ENCODE measurements at regions of chr6 and their contacts with region 1.

Region 1: GRCh38 chr6:53064726-53065215 is 433 bp upstream of the FBXO9 start:
- DNase-seq: peak; percentile 96 to 97
- H3K4me3 ChIP-seq: peak overlapping the region; percentile 90 to 99
- H3K27ac ChIP-seq: peak overlapping the region; percentile 95
- H3K4me1 ChIP-seq: peaks cover 47% of the 10 kb centered on the region
- H3K27me3 ChIP-seq: no peaks in the 10 kb centered on the region
- CTCF ChIP-seq: peak in 1 of 3 experiments; percentile 15
- POLR2A ChIP-seq: peak in 1 of 2 donors; percentile 21

Region 2: DNA sequence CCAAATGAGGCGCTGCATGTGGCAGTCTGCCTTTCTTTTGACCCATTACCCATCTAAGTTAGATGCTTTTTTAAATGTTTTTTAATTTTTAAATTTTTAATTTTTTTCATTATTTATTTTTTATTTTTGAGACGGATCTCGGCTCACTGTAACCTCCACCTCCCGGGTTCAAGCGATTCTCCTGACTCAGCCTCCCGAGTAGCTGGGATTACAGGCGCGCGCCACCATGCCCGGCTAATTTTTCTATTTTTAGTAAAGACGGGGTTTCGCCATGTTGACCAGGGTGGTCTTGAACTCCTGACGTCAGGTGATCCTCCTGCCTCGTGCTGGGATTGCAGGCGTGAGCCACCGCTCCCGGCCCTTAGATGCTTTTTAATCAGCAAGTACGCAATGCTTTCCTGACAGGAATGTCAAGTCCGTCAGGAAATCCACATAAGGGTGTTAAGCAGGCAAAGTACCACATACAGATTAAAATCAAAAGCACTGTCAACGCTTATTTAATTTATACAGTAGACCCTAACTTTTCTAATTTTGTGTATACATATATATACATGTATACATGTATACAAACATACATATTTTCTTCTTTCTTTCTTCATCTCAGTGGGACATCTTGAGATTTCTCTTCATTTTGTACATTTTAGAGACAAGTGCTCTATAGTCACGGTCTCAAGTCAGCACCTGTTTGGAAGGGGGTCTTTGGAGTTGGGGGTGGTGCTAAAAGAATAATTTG is 68.7 kb before region 1 on chr6:
- intact Hi-C with region 1: loop called (anchors 2 kb)
- DNase-seq: no peak
- H3K4me3 ChIP-seq: peak overlapping the region; percentile 63 to 71
- H3K27ac ChIP-seq: peak overlapping the region; percentile 91
- H3K4me1 ChIP-seq: peaks cover 32% of the 10 kb centered on the region
- H3K27me3 ChIP-seq: no peaks in the 10 kb centered on the region
- CTCF ChIP-seq: no peak
- POLR2A ChIP-seq: no peak